ENCODE measurements at regions of chr10 and their contacts with region 1.

Region 1: GRCh38 chr10:83801983-83802382 is 337.3 kb upstream of the GHITM start:
- DNase-seq: no peak
- H3K4me3 ChIP-seq: no peak overlapping the region
- H3K27ac ChIP-seq: no peak overlapping the region
- H3K4me1 ChIP-seq: no peaks in the 10 kb centered on the region
- H3K27me3 ChIP-seq: no peaks in the 10 kb centered on the region
- CTCF ChIP-seq: no peak
- POLR2A ChIP-seq: no peak

Region 2: DNA sequence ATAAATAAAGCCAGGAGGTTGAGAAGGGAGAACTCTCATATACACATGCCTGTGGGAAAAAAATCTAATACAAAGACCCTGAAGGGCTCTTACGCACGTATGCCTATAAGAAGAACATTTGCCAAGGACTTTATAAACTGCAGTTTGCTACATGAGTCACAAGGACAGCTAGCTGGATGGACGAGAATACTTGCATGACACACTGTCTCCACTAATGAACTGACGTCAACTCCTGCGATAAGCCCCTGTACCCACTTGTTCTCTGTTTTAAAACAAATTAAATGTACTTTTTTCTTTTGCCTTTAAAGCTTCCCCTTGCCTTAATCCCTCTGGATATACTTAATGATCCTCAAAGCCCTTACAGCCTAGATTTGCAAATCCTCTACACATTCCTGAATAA is 37.3 kb before region 1 on chr10:
- intact Hi-C with region 1: loop called (anchors 1 kb)
- DNase-seq: no peak
- H3K4me3 ChIP-seq: no peak overlapping the region
- H3K27ac ChIP-seq: no peak overlapping the region
- H3K4me1 ChIP-seq: no peaks in the 10 kb centered on the region
- H3K27me3 ChIP-seq: no peaks in the 10 kb centered on the region
- CTCF ChIP-seq: no peak
- POLR2A ChIP-seq: no peak